ENCODE measurements at regions of chr9 and their contacts with region 1.

Region 1: GRCh38 chr9:113349445-113350094 is at the start of gene BSPRY:
- DNase-seq: peak in 1 of 2 experiments; percentile 76
- H3K4me3 ChIP-seq: peak within 1 kb of the TSS; percentile 75 to 89 (median 76)
- H3K27ac ChIP-seq: no peak within 1 kb of the TSS
- H3K4me1 ChIP-seq: peaks cover 5 to 14% (median 10%) of the 10 kb centered on the region in 4 experiments
- H3K27me3 ChIP-seq: peaks cover 0 to 14% (median 2%) of the 10 kb centered on the region in 4 experiments; a peak in 5 of 7 replicates
- CTCF ChIP-seq: no peak
- EP300 ChIP-seq: no peak
- POLR2A ChIP-seq: peak in 1 of 2 experiments; percentile 49; a peak in 1 of 3 replicates
- RAD21 ChIP-seq: 0 out of 4 replicates have a peak, but pooled peaks of 1 of the 2 experiments have one; percentile 0
- total RNA-seq, gene BSPRY: 5.5 and 6.5 TPM in 2 replicates

Region 2: GRCh38 chr9:113361304-113362018 is 11.9 kb after region 1 on chr9:
- CTCF ChIA-PET with region 1: interaction called, 10 read pairs
- POLR2A ChIA-PET with region 1: interaction called, 4 read pairs
- DNase-seq: no peak
- H3K4me3 ChIP-seq: no peak overlapping the region
- H3K27ac ChIP-seq: no peak overlapping the region
- H3K4me1 ChIP-seq: no peaks in the 10 kb centered on the region; a peak in 1 of 7 replicates
- H3K27me3 ChIP-seq: no peaks in the 10 kb centered on the region
- CTCF ChIP-seq: no peak
- EP300 ChIP-seq: no peak
- POLR2A ChIP-seq: no peak
- RAD21 ChIP-seq: no peak

Region 3: DNA sequence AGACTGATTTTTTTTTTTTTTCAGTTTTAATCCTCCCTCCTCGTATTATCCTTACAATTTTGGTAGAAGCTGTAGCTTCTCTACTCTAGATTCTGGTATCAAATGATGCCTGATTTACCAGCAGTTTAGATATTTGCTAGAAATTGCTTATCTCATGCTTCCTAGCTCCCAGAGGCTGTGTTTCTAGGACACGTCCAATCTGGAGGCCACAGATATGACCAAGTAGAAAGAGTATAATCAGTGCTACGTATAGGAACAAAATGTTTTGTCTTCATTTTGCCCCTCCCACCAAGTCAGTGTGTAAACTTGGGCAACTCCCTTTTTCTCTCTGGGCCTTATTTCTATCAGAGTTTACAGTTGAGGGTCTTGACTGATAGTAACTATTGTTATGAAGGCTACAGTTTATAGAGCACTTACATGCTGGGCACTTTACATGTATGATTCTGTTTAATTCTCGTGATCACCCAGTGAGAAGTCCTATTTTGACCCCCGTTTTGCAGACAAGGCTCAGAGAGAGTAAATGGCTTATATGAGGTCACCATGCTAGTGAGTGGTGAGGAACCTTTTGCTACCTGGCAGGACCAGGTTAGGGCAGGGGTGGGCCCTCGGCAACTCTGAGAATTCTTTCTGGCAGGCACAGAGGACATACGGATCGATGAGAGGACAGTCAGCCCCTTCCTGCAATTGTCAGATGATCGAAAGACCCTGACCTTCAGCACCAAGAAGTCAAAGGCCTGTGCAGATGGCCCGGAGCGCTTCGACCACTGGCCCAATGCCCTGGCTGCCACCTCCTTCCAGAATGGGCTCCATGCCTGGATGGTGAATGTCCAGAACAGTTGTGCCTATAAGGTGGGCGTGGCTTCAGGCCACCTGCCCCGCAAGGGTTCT is 19.7 kb after region 1 on chr9:
- CTCF ChIA-PET with region 1: interaction called, 10 read pairs
- POLR2A ChIA-PET with region 1: interaction called, 11 read pairs
- DNase-seq: no peak
- H3K4me3 ChIP-seq: no peak overlapping the region
- H3K27ac ChIP-seq: no peak overlapping the region
- H3K4me1 ChIP-seq: peaks cover 0 to 5% (median 2%) of the 10 kb centered on the region in 4 experiments; a peak in 3 of 7 replicates
- H3K27me3 ChIP-seq: no peaks in the 10 kb centered on the region
- CTCF ChIP-seq: no peak
- EP300 ChIP-seq: no peak
- POLR2A ChIP-seq: no peak
- RAD21 ChIP-seq: no peak